ENCODE measurements at regions of chr7 and their contacts with region 1.

Region 1: GRCh38 chr7:141960687-141961422 is 12.7 kb downstream of the TAS2R38 start:
- DNase-seq: no peak
- H3K4me3 ChIP-seq: no peak overlapping the region
- CTCF ChIP-seq: no peak
- POLR2A ChIP-seq: no peak

Region 2: GRCh38 chr7:140084972-140085371 is 1875.9 kb before region 1 on chr7:
- intact Hi-C with region 1: loop called (anchors 10 kb)
- DNase-seq: no peak
- H3K4me3 ChIP-seq: no peak overlapping the region
- CTCF ChIP-seq: no peak
- POLR2A ChIP-seq: no peak

Region 3: DNA sequence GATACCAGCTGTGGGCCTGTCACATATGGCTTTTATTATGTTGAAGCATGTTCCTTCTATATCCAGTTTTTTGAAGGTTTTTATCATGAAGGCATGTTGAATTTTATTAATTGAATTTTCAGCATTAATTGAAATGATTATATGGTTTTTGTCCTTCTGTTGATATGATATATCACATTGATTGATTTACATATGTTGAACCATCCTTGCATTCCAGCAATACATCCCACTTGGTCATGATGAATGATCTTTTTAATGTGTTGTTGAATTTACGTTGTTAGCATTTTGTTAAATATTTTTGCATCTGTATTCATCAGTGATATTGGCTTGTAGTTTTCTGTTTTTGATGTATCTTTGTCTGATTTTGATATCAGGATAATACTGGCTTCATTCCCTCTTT is 140.8 kb before region 1 on chr7:
- intact Hi-C with region 1: no loop called
- DNase-seq: no peak
- H3K4me3 ChIP-seq: no peak overlapping the region
- CTCF ChIP-seq: no peak
- POLR2A ChIP-seq: no peak

Measured in lower leg skin (tissue), 4 donors.